MCF 10A (cell line): ENCODE measurements at regions of chr17 and their contacts with region 1.

Region 1: DNA sequence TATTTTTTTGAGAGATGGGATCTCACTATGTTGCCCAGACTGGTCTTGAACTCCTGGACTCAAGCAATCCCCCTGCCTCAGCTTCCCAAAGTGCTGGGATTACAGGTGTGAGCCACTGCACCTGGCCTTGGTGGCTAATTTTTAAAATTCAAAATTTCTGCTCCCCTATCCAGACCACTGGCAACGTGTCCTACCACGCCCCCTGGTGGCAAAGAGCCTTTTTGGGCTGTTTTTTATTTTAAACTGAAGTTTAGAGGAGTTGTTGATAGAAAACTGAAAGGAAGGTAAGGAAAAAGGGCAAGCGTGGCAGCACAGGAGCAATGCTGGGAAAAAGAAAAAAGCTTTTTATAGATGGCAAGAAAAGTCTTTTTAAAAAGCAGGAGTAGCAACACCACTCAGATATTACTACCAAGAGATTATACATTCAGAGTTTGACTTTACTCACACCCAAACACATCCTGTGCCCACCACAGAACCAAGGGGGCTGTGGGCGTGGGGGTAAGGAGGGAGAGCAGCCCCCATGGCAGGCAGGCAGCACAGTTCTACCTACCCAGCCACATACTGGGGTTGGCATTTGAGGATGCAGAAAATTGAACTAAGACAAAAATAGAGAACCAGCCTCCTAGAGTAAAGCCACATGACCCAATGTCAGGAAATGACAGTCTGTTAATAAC is 4.2 kb upstream of the MXRA7 start:
- DNase-seq: peak; percentile 67
- H3K4me3 Mint-ChIP-seq: no peak overlapping the region
- H3K27ac Mint-ChIP-seq: peak overlapping the region; percentile 55
- H3K4me1 Mint-ChIP-seq: peaks cover 13% of the 10 kb centered on the region
- H3K27me3 Mint-ChIP-seq: no peaks in the 10 kb centered on the region
- CTCF ChIP-seq: peak; percentile 74

Region 2: GRCh38 chr17:75959051-75959838 is 755.7 kb before region 1 on chr17:
- CTCF ChIA-PET with region 1: no interaction called
- POLR2A ChIA-PET with region 1: no interaction called
- intact Hi-C with region 1: no loop called
- DNase-seq: no peak
- H3K4me3 Mint-ChIP-seq: no peak overlapping the region
- H3K27ac Mint-ChIP-seq: no peak overlapping the region
- H3K4me1 Mint-ChIP-seq: no peaks in the 10 kb centered on the region
- H3K27me3 Mint-ChIP-seq: no peaks in the 10 kb centered on the region
- CTCF ChIP-seq: no peak

Region 3: DNA sequence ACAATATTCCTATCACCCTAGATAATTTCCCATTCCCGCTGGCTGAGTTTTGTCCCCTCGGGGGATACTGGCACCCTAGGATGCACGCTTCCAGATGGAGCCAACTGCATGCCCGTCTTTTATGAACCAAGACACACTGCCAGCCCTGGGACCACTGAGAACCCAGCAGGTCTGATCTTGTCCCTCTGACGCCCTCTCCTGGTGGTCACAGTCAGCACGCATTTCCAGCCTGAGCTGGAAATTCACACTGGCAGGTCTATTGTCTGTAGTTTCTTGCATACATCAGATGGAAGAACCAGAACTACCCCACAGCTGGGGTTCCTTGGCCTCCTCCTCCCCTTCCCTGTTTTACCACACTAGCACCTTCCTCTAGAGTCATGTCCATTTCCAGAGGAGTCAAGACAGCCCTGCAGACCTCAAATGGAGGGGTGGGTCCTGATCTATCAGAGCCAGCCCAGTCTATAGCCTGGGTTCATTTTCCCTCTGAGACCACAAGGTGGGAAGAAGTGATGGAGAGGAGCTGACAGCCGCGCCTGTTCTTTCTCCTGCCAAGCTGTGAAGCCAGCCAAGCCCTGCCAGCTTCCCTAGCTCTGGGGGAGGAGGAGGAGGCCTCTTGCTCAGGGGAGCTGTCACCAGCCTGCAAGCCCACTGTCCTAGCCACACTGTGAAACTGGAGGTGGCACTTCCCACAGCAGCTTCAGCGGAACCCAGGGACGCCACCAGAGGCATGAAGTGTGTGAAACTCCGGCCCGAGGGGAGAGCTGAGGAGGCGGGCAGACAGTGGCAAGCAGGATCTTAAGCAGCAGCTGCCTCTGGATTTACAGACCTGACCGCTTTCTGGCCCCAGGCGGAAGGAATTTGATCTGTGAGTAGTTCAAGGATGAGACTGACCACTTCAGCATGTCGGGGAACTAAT is 33.5 kb before region 1 on chr17:
- CTCF ChIA-PET with region 1: interaction called, 6 read pairs
- POLR2A ChIA-PET with region 1: interaction called, 3 read pairs
- intact Hi-C with region 1: loop called (anchors 5 kb)
- DNase-seq: peak; percentile 69
- H3K4me3 Mint-ChIP-seq: no peak overlapping the region
- H3K27ac Mint-ChIP-seq: no peak overlapping the region
- H3K4me1 Mint-ChIP-seq: peaks cover 5% of the 10 kb centered on the region
- H3K27me3 Mint-ChIP-seq: no peaks in the 10 kb centered on the region
- CTCF ChIP-seq: peak; percentile 65

Region 4: DNA sequence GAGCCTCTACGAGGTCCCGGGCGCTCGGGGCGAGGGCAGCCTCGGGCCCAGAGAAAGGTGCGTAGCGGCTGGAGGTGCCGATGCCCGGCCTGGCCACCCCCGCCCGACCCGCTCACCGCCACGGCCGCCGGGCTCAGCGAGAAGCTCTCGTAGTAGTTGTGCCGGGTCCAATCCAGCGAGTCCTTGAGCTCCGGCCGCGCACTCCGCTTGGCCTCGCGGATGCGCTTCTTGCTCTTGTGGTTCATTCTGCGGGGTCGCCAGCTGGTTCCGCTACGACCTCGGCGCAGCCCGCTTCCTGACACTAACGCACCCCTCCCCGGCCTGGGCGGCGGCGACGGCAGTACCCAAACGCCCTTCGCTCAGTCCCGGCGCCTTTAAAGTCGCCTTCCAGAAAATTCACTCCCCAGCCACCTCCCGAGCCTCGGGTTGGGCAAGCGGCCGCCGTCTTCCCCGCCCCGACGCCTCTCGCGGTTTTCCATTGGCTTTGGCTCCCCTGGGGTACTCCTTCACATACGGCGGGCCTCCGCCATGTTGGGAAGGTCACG is 11.3 kb after region 1 on chr17 and contains the start of gene JMJD6:
- CTCF ChIA-PET with region 1: interaction called, 7 read pairs
- POLR2A ChIA-PET with region 1: interaction called, 51 read pairs
- intact Hi-C with region 1: no loop called
- DNase-seq: peak; percentile 97
- H3K4me3 Mint-ChIP-seq: peak within 1 kb of the TSS; percentile 90
- H3K27ac Mint-ChIP-seq: peak within 1 kb of the TSS; percentile 94
- H3K4me1 Mint-ChIP-seq: peaks cover 6% of the 10 kb centered on the region
- H3K27me3 Mint-ChIP-seq: no peaks in the 10 kb centered on the region
- CTCF ChIP-seq: no peak
- total RNA-seq, gene JMJD6: 29.4 and 45.8 TPM in 2 replicates